ENCODE measurements at regions of chr6 and their contacts with region 1.

Region 1: GRCh38 chr6:74447013-74447412 is 751.0 kb downstream of the CD109 start:
- DNase-seq: peak; percentile 47
- ATAC-seq: no peak
- H3K4me3 ChIP-seq: no peak overlapping the region
- H3K27ac ChIP-seq: no peak overlapping the region
- H3K4me1 ChIP-seq: no peaks in the 10 kb centered on the region; the same call in 1 of the 2 replicates
- H3K27me3 ChIP-seq: no peaks in the 10 kb centered on the region
- CTCF ChIP-seq: no peak

Region 2: GRCh38 chr6:74167976-74168375 is 279.0 kb before region 1 on chr6:
- CTCF ChIA-PET with region 1: no interaction called
- POLR2A ChIA-PET with region 1: interaction called, 15 read pairs
- intact Hi-C with region 1: no loop called
- DNase-seq: no peak
- ATAC-seq: no peak
- H3K4me3 ChIP-seq: no peak overlapping the region
- H3K27ac ChIP-seq: no peak overlapping the region
- H3K4me1 ChIP-seq: no peaks in the 10 kb centered on the region
- H3K27me3 ChIP-seq: no peaks in the 10 kb centered on the region
- CTCF ChIP-seq: no peak

Measured in PC-3 (cell line).